ENCODE measurements at regions of chr4 and their contacts with region 1.

Region 1: GRCh38 chr4:2008875-2009703 is at the start of gene NELFA:
- DNase-seq: peak; percentile 93
- ATAC-seq: peak; percentile 87
- H3K4me3 ChIP-seq: peak within 1 kb of the TSS; percentile 80 to 100 (median 99)
- H3K27ac ChIP-seq: peak within 1 kb of the TSS; percentile 98
- H3K4me1 ChIP-seq: peaks cover 26% of the 10 kb centered on the region
- H3K27me3 ChIP-seq: no peaks in the 10 kb centered on the region; a peak in 1 of 5 replicates
- CTCF ChIP-seq: peak; percentile 66
- EP300 ChIP-seq: no peak
- POLR2A ChIP-seq: peak in 1 of 2 experiments; percentile 77; a peak in 2 of 4 replicates
- RAD21 ChIP-seq: peak; percentile 44; the same call in 1 of the 2 replicates
- total RNA-seq, gene NELFA: 11.4 and 18.5 TPM in 2 replicates

Region 2: DNA sequence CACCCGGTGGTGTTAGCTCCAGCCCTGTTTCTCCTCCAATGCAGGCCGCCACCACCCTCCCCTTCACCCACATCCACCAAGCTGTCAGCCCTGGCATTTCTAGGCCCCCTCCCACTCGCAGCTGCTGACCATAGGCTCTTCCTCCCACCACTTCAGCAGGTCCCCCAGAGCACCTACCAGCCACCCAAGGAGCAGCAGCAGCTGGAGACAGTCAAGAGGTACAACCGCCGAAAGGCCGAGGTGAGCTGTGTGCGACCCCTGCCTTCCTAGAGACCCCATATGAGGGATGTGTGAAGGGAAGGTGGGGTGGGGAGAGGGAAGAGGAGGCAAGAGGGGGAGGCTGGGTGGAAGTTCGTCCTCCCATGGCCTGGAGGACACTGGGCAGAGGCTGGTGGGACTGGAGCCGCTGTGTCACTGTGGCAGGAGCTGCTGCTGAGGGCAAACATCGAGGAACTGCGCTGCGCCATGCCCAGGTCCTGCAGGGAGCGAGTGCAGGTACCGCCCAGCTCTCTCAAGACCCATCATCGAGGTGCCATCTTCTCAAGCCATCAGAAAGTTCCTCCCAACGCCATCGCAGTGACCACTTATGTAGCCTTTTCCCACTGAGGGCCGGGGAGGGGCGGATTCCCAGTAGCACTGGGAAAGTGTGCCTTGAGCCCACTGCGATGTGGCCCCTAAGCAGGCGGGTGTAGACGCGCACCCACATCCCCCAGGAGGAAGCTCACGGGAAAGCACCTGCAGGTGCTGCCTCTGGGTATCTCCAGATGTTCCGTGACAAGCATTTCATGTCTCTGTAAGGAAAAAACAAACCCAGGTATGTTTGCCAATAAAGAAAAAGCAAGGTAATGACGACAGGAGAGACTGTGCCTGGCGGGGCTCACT is 440.7 kb after region 1 on chr4:
- CTCF ChIA-PET with region 1: no interaction called
- POLR2A ChIA-PET with region 1: no interaction called
- in situ Hi-C with region 1: no loop called
- intact Hi-C with region 1: loop called (anchors 5 kb)
- DNase-seq: no peak
- ATAC-seq: no peak
- H3K4me3 ChIP-seq: no peak overlapping the region
- H3K27ac ChIP-seq: no peak overlapping the region
- H3K4me1 ChIP-seq: peaks cover 12% of the 10 kb centered on the region
- H3K27me3 ChIP-seq: peaks cover 4 to 34% of the 10 kb centered on the region in 2 experiments; a peak in 4 of 5 replicates
- CTCF ChIP-seq: no peak
- EP300 ChIP-seq: no peak
- POLR2A ChIP-seq: no peak
- RAD21 ChIP-seq: no peak